Right ventricle myocardium inferior (tissue), 1 donor: ENCODE measurements at regions of chr10 and their contacts with region 1.

Region 1: GRCh38 chr10:114550756-114551635 is 107.1 kb downstream of the ABLIM1 start:
- DNase-seq: peak; percentile 82
- ATAC-seq: peak; percentile 40

Region 2: DNA sequence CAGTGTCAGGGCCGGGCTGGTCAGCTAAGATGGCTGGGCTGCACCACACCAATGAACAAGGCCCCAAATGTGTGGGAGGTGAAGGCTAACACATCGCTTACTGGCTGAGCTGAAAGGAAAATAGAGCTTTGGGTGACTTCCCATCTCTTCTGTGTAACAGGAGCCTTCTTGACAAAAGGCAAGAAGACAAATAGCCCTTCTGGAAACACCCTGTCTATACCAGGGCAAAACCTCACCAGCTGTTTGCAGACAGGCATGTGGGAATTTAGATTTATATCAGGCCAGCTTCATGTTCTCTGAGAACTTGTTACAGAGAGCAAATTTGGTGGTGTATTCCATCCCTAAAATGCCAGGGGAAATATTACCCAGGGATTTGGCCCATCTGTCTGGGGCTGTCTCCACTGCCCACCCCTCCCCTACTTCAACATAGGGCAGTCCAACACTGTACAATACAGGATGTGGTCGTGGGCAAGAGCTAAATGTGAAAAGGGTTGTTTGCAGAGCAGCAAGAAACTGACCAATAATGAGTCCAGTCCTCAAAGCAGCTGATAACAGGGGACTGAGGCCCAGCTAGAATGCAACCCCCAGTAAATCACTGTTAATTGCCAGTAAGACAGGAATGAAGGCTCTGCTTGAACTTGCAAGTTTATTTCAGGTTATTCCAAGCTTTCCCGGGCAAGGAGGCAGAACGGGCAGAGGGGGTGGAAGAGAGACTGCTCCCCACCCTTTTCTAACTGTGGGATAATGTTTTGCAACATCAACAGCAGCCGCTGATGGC is 183.8 kb before region 1 on chr10:
- intact Hi-C with region 1: no loop called
- DNase-seq: no peak
- ATAC-seq: peak; percentile 41

Region 3: GRCh38 chr10:114470956-114471905 is 79.8 kb before region 1 on chr10:
- intact Hi-C with region 1: loop called (anchors 5 kb)
- DNase-seq: peak; percentile 82
- ATAC-seq: peak; percentile 67

Region 4: GRCh38 chr10:114694752-114695151 is 143.8 kb after region 1 on chr10:
- intact Hi-C with region 1: loop called (anchors 5 kb)
- DNase-seq: no peak
- ATAC-seq: no peak

Region 5: GRCh38 chr10:114719311-114719710 is 168.3 kb after region 1 on chr10:
- intact Hi-C with region 1: loop called (anchors 5 kb)
- DNase-seq: no peak
- ATAC-seq: peak; percentile 86

Region 6: GRCh38 chr10:114779803-114780609 is 229.0 kb after region 1 on chr10:
- intact Hi-C with region 1: loop called (anchors 2 kb)
- DNase-seq: no peak
- ATAC-seq: no peak